HepG2 (cell line): ENCODE measurements at regions of chr4 and their contacts with region 1.

Region 1: GRCh38 chr4:68871809-68872642 is 56.2 kb downstream of the UGT2B10 start:
- DNase-seq: peak; percentile 91
- ATAC-seq: peak; percentile 92
- H3K4me3 ChIP-seq: peak overlapping the region in 2 of 3 experiments; percentile 47 to 55; a peak in 3 of 6 replicates
- H3K27ac ChIP-seq: peak overlapping the region; percentile 85
- H3K4me1 ChIP-seq: peaks cover 59% of the 10 kb centered on the region
- H3K27me3 ChIP-seq: no peaks in the 10 kb centered on the region
- CTCF ChIP-seq: no peak
- EP300 ChIP-seq: peak in 1 of 2 experiments; percentile 90; a peak in 2 of 4 replicates
- POLR2A ChIP-seq: no peak; a peak in 1 of 4 replicates
- RAD21 ChIP-seq: peak; percentile 11; the same call in 1 of the 2 replicates

Region 2: DNA sequence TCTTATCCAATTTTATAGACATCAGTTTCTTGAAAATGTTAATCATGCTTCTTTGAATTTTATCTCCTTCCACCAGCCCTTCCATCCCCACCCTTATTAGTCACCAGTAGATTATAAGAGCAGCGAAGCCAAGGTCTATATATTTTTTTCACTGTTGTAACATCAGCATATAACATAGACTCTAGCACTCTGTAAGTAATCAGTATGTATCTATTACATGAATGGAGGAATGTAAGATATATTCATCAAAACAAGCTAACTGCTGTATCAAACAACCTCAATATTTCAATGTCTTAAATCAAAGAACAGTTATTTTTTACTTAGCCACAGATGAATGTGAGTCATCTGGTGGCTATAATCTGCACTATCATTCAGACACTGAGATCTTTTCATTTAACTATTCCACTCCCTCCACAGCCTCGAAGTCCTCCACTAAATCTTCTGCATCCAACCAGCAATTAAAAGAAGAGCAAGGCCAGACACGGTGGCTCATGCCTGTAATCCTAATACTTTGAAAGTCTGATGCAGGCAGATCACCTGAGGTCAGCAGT is 1505.6 kb before region 1 on chr4:
- CTCF ChIA-PET with region 1: no interaction called
- POLR2A ChIA-PET with region 1: no interaction called
- in situ Hi-C with region 1: no loop called
- intact Hi-C with region 1: no loop called
- DNase-seq: no peak
- ATAC-seq: no peak
- H3K4me3 ChIP-seq: no peak overlapping the region
- H3K27ac ChIP-seq: no peak overlapping the region
- H3K4me1 ChIP-seq: no peaks in the 10 kb centered on the region
- H3K27me3 ChIP-seq: no peaks in the 10 kb centered on the region
- CTCF ChIP-seq: no peak
- EP300 ChIP-seq: no peak
- POLR2A ChIP-seq: no peak
- RAD21 ChIP-seq: no peak

Region 3: GRCh38 chr4:68820770-68821169 is 51.3 kb before region 1 on chr4:
- CTCF ChIA-PET with region 1: no interaction called
- POLR2A ChIA-PET with region 1: interaction called, 33 read pairs
- in situ Hi-C with region 1: no loop called
- intact Hi-C with region 1: loop called (anchors 2 kb)
- DNase-seq: no peak
- ATAC-seq: no peak
- H3K4me3 ChIP-seq: no peak overlapping the region
- H3K27ac ChIP-seq: no peak overlapping the region
- H3K4me1 ChIP-seq: peaks cover 77% of the 10 kb centered on the region
- H3K27me3 ChIP-seq: no peaks in the 10 kb centered on the region
- CTCF ChIP-seq: no peak
- EP300 ChIP-seq: no peak
- POLR2A ChIP-seq: no peak
- RAD21 ChIP-seq: no peak

Region 4: GRCh38 chr4:69095301-69095731 is 223.3 kb after region 1 on chr4:
- CTCF ChIA-PET with region 1: no interaction called
- POLR2A ChIA-PET with region 1: interaction called, 6 read pairs
- in situ Hi-C with region 1: no loop called
- intact Hi-C with region 1: loop called (anchors 5 kb)
- DNase-seq: peak; percentile 89
- ATAC-seq: peak; percentile 72
- H3K4me3 ChIP-seq: no peak overlapping the region; a peak in 1 of 6 replicates
- H3K27ac ChIP-seq: peak overlapping the region; percentile 72
- H3K4me1 ChIP-seq: peaks cover 61% of the 10 kb centered on the region
- H3K27me3 ChIP-seq: no peaks in the 10 kb centered on the region
- CTCF ChIP-seq: no peak
- EP300 ChIP-seq: peak in 1 of 2 experiments; percentile 97; a peak in 2 of 4 replicates
- POLR2A ChIP-seq: no peak
- RAD21 ChIP-seq: no peak